ENCODE measurements at regions of chr20 and their contacts with region 1.

Region 1: DNA sequence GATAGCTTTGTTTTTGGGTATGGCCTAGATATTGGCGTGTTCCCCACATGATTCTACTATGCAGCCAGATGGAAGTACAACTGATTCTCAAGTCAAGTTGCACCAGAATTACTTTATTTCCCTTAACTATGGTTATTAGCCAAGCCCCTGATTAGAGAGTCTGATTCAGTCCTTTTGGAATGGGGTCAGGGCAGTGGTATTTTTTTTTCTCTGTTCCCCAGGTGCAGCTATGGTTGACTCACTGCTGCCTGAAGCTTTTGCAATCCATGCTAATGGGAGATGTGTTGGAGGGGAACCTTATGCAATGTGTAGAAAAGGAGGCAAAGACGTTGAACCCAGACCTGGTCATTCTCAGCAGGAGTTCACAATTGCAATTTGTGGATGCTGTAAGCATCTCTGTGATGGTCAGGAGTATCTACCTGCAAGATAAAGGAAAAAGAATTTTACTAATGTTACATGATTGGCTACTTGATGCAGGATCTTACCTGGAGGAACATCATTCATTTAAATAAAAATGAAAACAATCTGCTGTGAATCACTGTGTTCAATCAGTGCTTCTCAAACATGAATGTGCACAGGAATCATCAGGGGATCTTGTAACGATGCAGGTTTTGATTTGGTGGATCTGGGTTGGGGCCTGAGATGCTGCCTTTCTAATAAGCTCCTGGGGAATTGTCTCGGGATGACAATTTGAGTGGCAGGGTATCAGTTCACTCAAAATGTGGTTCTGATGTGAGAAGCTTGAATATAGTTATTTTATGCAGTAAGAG is 49.4 kb downstream of the PFDN4 start:
- DNase-seq: no peak
- ATAC-seq: peak in 4 of 8 donors; percentile 14 to 74 (median 66)
- H3K4me3 ChIP-seq: no peak overlapping the region
- H3K27ac ChIP-seq: no peak overlapping the region
- H3K4me1 ChIP-seq: no peaks in the 10 kb centered on the region
- H3K27me3 ChIP-seq: no peaks in the 10 kb centered on the region
- CTCF ChIP-seq: no peak

Region 2: GRCh38 chr20:52847029-52847660 is 1410.1 kb before region 1 on chr20:
- intact Hi-C with region 1: loop called in 1 of 10 experiments (anchors 5 kb)
- DNase-seq: no peak
- ATAC-seq: no peak
- H3K4me3 ChIP-seq: no peak overlapping the region
- H3K27ac ChIP-seq: no peak overlapping the region
- H3K4me1 ChIP-seq: no peaks in the 10 kb centered on the region
- H3K27me3 ChIP-seq: peaks cover 0 to 4% (median 0%) of the 10 kb centered on the region in 7 donors
- CTCF ChIP-seq: no peak

Region 3: DNA sequence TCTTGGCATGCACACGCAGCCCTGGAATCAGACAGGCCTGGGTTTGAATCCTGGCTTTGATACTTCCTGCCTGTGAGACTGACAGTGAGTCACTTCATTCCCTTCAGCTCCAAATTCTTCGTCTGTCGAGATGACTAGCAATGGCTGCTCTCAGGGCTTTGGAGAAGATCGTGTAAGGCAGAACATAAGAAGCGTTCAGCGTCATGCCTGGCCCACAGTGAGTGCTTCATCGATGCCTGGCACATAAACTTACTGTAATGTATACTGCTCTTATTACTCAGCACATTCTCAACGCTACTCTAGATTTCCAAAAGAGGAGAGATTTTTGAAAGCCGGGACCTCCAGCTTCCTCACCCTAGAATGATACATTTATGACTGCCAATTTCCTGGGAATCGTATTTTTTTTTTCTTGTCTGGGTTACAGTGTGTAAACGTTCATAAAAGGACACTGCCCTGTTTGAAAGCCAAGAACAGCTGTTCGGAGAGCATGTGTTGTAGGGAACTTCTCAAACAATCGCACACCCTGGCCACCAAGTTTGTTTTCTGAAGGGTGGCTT is 170.7 kb before region 1 on chr20:
- intact Hi-C with region 1: no loop called
- DNase-seq: no peak
- ATAC-seq: peak in 1 of 8 donors; percentile 47
- H3K4me3 ChIP-seq: peak overlapping the region in 1 of 10 donors; percentile 5
- H3K27ac ChIP-seq: no peak overlapping the region
- H3K4me1 ChIP-seq: no peaks in the 10 kb centered on the region
- H3K27me3 ChIP-seq: peaks cover 0 to 5% (median 0%) of the 10 kb centered on the region in 7 donors
- CTCF ChIP-seq: no peak

Region 4: GRCh38 chr20:54173653-54174456 is 83.4 kb before region 1 on chr20 and contains the start of gene CYP24A1:
- intact Hi-C with region 1: no loop called
- DNase-seq: no peak
- ATAC-seq: peak in 1 of 8 donors; percentile 41
- H3K4me3 ChIP-seq: peak within 1 kb of the TSS in 8 of 10 donors; percentile 5 to 29 (median 12)
- H3K27ac ChIP-seq: no peak within 1 kb of the TSS
- H3K4me1 ChIP-seq: peaks cover 0 to 29% (median 21%) of the 10 kb centered on the region in 9 donors
- H3K27me3 ChIP-seq: peaks cover 11 to 100% (median 92%) of the 10 kb centered on the region in 7 donors
- CTCF ChIP-seq: no peak
- total RNA-seq, gene CYP24A1: not detected

Region 5: DNA sequence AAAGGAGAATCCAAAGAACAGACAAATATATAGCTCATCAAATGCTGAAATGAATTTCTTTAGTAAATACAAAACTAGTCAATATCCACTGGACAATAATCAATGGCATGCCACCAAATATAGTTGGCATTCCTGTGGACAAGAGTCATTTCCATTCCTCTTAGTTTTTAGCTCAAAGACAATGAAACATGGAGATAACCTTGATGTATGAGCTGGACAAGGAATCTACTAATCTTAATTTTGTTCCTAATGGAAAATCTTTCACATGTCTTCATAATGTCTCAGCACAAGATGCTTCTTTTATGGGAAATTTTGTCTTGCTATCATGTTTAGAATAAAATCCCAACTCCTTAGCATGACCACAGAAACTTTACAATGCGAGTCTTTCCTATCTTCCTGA is 38.4 kb after region 1 on chr20:
- intact Hi-C with region 1: loop called in 1 of 10 experiments (anchors 2 kb)
- DNase-seq: no peak
- ATAC-seq: no peak
- H3K4me3 ChIP-seq: no peak overlapping the region
- H3K27ac ChIP-seq: no peak overlapping the region
- H3K4me1 ChIP-seq: peaks cover 0 to 13% (median 0%) of the 10 kb centered on the region in 9 donors
- H3K27me3 ChIP-seq: peaks cover 0 to 4% (median 0%) of the 10 kb centered on the region in 7 donors
- CTCF ChIP-seq: no peak